Posterior vena cava (tissue), 2 donors: ENCODE measurements at regions of chr1 and their contacts with region 1.

Region 1: DNA sequence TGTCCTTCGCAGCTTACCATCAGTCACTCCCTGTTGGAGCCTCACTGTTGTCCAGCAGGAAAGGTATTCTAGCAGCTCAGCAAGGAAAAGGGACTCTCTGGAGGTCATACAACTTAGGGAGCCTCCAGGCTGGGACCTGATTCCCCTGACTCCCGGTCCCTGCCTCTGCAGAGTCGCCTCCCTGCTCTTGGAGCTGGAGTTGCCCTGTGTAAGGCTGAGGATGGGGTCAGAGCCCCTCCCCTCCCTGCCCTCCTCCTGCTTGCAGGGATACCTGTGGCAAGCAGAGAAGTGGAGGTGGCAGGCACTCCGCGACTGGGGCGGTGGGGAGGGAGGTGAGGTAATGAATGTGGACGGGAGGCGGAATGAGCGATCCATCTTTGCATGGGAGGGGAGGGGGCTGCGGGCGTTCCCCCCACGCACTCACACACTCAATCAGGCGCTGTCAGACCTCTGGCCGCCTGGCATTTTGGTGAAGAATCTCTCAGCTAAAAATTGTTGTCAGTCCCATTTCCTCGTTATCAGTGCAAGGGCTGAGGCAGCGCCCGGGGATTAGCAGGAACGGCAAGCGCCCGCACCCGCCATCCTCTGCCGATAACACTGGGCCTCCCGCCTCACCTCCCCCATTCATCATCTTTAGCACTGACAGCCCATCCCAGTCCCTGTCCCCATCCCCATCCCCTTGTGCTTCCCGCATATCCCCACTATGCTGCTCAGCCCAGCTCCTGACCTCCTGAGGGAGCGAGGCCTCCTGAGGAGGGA is 64.3 kb downstream of the TMEM53 start:
- DNase-seq: no peak

Region 2: GRCh38 chr1:44652445-44653106 is 42.6 kb after region 1 on chr1:
- intact Hi-C with region 1: loop called (anchors 2 kb)
- DNase-seq: peak; percentile 93

Region 3: GRCh38 chr1:44674113-44675000 is 64.4 kb after region 1 on chr1 and contains the starts of genes ARMH1 and TMEM53:
- intact Hi-C with region 1: loop called in 1 of 2 experiments (anchors 2 kb)
- DNase-seq: peak; percentile 100
- total RNA-seq, gene ARMH1: 1.0 to 1.6 TPM
- total RNA-seq, gene TMEM53: 3.8 to 5.3 TPM